GM18951 (cell line): ENCODE measurements at regions of chr9 and their contacts with region 1.

Region 1: GRCh38 chr9:124771021-124771866 is at the start of gene NR6A1:
- POLR2A ChIP-seq: peak; percentile 55

Region 2: GRCh38 chr9:124812401-124813016 is 41.3 kb after region 1 on chr9:
- in situ Hi-C with region 1: no loop called
- POLR2A ChIP-seq: no peak

Region 3: DNA sequence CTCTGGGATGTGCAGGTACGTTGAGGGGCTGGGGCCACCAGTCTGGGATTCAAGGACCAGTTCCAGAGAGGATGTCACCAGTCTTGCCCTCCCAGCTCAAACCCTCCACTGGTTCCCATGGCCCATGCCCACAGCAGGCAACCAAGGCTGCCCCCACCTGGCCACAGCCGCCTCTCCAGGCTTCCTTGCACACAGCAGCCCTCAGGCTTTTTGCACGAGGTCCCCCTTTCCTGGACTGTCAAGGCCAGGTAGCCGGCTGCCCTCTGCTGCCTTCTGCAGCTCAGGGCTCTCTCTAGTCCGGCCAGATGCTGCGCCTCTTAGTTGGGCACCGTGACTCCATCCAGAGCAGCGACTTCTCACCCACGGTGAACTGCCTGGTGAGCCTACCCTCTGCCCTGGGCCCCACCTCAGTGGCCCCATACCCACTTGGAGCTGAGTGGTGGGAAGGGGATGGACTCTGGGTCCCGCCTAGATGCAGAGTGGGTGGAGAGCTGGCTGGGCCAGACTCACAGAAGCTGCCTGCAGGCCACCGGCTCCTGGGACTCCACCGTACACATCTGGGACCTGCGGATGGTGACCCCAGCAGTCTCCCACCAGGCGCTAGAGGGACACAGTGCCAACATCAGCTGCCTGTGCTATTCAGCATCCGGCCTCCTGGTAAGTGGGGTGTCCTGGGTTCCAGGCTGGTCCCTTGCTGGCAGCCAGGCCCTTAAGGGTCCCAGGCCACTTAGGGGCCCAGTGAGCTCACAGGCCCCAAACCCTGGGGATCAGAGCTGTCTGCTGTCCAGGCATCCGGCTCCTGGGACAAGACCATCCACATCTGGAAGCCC is 84.9 kb after region 1 on chr9:
- in situ Hi-C with region 1: loop called (anchors 5 kb)
- POLR2A ChIP-seq: peak; percentile 22

Region 4: GRCh38 chr9:125143375-125144090 is 372.3 kb after region 1 on chr9 and contains the start of gene SCAI:
- in situ Hi-C with region 1: loop called (anchors 10 kb)
- POLR2A ChIP-seq: peak; percentile 74

Region 5: DNA sequence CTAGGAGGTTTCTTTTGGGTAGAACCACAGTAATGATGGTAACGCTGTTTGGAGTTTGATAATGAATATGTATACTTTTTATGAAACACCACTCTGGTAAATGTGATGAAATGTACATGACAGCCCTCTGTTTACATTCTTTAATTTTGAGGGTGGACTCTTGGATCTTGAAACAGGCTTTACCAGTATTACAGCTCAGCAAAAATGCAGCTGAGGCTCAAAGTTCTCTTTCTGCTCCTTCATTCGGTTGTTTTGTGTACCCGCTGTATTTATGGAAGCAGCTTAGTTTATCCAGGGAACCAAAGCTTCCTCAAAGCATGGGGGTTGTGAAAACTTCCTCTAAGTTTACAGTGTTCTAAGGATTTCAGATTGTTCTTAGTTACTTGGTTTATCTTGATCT is 501.5 kb after region 1 on chr9:
- in situ Hi-C with region 1: no loop called
- POLR2A ChIP-seq: no peak

Region 6: DNA sequence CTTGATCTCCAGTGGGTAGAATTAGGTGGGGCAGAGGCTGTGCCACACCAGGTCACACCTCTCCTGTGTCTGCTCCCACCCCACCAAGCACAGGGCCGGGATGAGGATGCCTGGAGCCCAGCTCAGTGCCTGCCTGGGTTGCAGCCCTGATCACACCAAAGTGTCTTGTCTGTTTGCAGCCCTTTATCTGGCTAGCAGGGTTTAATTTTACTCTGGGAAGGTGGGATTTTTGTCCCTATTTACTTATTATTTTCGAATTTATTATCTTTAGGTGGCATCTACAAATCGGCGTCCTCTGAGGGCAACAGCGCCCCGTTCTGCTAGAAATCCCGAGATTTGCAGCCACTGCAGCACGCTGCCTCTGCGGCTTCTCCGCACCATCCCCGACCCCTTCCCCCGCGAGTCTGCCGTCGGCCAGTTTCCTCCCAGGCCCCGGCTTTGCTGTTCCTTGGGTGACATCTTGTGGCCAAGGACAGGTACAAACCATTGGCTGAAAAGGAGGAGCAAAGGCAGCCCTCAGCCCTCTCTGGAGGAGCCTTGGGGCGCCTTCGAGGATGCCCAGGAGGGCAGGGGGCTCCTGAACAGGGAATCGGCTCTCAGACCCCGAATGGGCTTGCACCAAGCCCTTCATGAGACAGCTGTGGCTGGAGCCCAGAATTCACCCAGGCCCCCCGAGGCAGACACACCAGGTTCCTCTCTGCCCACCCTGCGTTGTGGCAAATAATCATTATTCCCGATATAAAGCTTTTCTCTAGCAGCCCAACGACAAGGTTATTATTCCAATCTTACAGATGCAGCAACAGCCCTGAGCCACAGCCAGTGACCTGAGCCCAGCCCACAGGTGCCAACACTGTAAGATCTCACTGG is 603.4 kb after region 1 on chr9:
- in situ Hi-C with region 1: loop called (anchors 10 kb)
- POLR2A ChIP-seq: no peak